ENCODE measurements at regions of chr5 and their contacts with region 1.

Region 1: GRCh38 chr5:102153003-102153759 is 142.9 kb downstream of the SLCO4C1 start:
- DNase-seq: peak; percentile 48
- ATAC-seq: peak; percentile 98
- H3K4me3 ChIP-seq: no peak overlapping the region
- H3K27ac ChIP-seq: no peak overlapping the region
- H3K4me1 ChIP-seq: peaks cover 20% of the 10 kb centered on the region
- H3K27me3 ChIP-seq: no peaks in the 10 kb centered on the region
- CTCF ChIP-seq: peak; percentile 81
- EP300 ChIP-seq: no peak
- POLR2A ChIP-seq: no peak
- RAD21 ChIP-seq: peak; percentile 58

Region 2: DNA sequence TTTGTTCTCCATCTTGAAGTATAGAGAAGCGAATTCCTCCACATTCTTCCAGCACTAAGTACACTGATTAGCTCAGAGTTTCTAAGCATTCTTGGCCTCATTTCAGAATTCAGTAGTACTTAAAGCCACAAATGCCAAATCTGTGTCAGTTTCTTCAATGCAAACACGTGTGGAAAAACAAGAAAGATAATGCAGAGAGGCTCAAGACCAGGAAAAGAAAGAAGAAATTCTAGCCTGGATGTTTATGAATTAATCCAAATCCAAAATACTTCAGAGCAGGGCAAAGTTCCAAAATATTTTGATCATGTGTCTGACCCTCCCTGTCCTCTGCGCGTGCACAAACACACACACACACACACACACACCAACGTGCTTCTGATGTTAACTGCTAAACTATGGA is 314.7 kb before region 1 on chr5:
- CTCF ChIA-PET with region 1: no interaction called
- POLR2A ChIA-PET with region 1: no interaction called
- in situ Hi-C with region 1: no loop called
- intact Hi-C with region 1: no loop called
- DNase-seq: no peak
- ATAC-seq: no peak
- H3K4me3 ChIP-seq: no peak overlapping the region
- H3K27ac ChIP-seq: no peak overlapping the region
- H3K4me1 ChIP-seq: no peaks in the 10 kb centered on the region
- H3K27me3 ChIP-seq: no peaks in the 10 kb centered on the region
- CTCF ChIP-seq: no peak
- EP300 ChIP-seq: no peak
- POLR2A ChIP-seq: no peak
- RAD21 ChIP-seq: no peak

Region 3: GRCh38 chr5:101977729-101978345 is 175.3 kb before region 1 on chr5:
- CTCF ChIA-PET with region 1: no interaction called
- POLR2A ChIA-PET with region 1: no interaction called
- in situ Hi-C with region 1: no loop called
- intact Hi-C with region 1: loop called (anchors 2 kb)
- DNase-seq: peak; percentile 49
- ATAC-seq: peak; percentile 57; the same call in 1 of the 3 replicates
- H3K4me3 ChIP-seq: no peak overlapping the region
- H3K27ac ChIP-seq: no peak overlapping the region
- H3K4me1 ChIP-seq: no peaks in the 10 kb centered on the region
- H3K27me3 ChIP-seq: no peaks in the 10 kb centered on the region
- CTCF ChIP-seq: peak; percentile 73
- EP300 ChIP-seq: no peak
- POLR2A ChIP-seq: no peak
- RAD21 ChIP-seq: peak; percentile 38; the same call in 1 of the 2 replicates

Region 4: GRCh38 chr5:102036927-102037326 is 116.3 kb before region 1 on chr5:
- CTCF ChIA-PET with region 1: no interaction called
- POLR2A ChIA-PET with region 1: no interaction called
- in situ Hi-C with region 1: no loop called
- intact Hi-C with region 1: no loop called
- DNase-seq: no peak
- ATAC-seq: no peak
- H3K4me3 ChIP-seq: no peak overlapping the region
- H3K27ac ChIP-seq: no peak overlapping the region
- H3K4me1 ChIP-seq: no peaks in the 10 kb centered on the region
- H3K27me3 ChIP-seq: no peaks in the 10 kb centered on the region
- CTCF ChIP-seq: no peak
- EP300 ChIP-seq: no peak
- POLR2A ChIP-seq: no peak
- RAD21 ChIP-seq: no peak

Region 5: GRCh38 chr5:102090770-102091381 is 62.3 kb before region 1 on chr5:
- CTCF ChIA-PET with region 1: no interaction called
- POLR2A ChIA-PET with region 1: no interaction called
- in situ Hi-C with region 1: loop called (anchors 5 kb)
- intact Hi-C with region 1: loop called (anchors 2 kb)
- DNase-seq: peak; percentile 77
- ATAC-seq: peak; percentile 100
- H3K4me3 ChIP-seq: no peak overlapping the region
- H3K27ac ChIP-seq: no peak overlapping the region
- H3K4me1 ChIP-seq: peaks cover 8% of the 10 kb centered on the region
- H3K27me3 ChIP-seq: no peaks in the 10 kb centered on the region; a peak in 1 of 5 replicates
- CTCF ChIP-seq: peak; percentile 81
- EP300 ChIP-seq: no peak
- POLR2A ChIP-seq: no peak
- RAD21 ChIP-seq: peak; percentile 73

Region 6: DNA sequence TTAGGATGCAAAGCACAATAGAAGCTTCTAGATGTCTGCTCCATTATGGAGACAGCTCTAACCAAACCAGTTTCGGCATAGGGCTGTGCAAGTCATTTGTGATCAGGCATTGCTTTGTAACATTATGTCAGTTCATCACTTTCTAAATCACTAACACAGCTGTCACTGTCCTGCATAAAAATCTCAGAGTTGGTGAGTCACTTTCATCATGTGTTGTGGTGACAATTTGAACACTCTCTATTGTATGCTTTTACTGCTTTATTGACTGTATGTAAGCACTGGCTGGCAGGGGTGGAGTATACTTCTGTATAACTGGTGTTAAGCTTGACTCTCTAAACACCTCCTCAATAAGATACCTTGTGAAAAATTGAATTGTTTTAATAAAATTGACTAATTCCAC is 65.0 kb after region 1 on chr5:
- CTCF ChIA-PET with region 1: interaction called, 12 read pairs
- POLR2A ChIA-PET with region 1: no interaction called
- in situ Hi-C with region 1: loop called (anchors 5 kb)
- intact Hi-C with region 1: loop called (anchors 2 kb)
- DNase-seq: peak; percentile 28
- ATAC-seq: no peak; the same call in 2 of the 3 replicates
- H3K4me3 ChIP-seq: no peak overlapping the region
- H3K27ac ChIP-seq: no peak overlapping the region
- H3K4me1 ChIP-seq: peaks cover 47% of the 10 kb centered on the region
- H3K27me3 ChIP-seq: no peaks in the 10 kb centered on the region
- CTCF ChIP-seq: no peak
- EP300 ChIP-seq: no peak
- POLR2A ChIP-seq: no peak
- RAD21 ChIP-seq: no peak

Region 7: DNA sequence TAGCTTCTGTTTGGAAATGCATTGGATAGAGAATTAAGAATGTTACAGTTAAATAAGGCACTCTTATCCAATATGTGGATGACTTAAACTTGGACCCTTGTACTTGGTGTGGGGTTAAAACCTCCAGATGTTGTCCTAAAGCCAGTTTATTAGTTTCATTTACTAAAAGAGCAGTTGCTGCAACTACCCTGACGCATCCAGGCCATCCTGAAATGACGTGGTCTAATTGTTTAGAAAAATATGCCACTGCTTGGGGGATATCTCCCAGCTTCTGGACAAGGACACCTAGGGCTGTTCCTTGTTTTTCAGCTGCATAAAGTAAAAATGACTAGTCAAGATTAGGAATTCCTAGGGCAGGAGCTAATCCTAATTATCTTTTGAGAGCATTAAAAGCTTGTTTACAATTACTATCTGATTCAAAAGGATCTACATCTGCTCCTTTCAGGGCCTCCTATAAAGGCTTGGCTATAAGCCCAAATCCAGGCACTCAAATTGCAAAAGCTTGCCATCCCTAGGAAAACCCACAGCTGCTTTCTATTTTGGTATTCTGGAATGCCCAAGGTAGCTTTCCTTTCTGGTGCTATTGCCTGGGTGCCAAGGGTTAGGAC is 188.6 kb after region 1 on chr5:
- CTCF ChIA-PET with region 1: no interaction called
- POLR2A ChIA-PET with region 1: no interaction called
- in situ Hi-C with region 1: no loop called
- intact Hi-C with region 1: no loop called
- DNase-seq: no peak
- ATAC-seq: no peak
- H3K4me3 ChIP-seq: no peak overlapping the region
- H3K27ac ChIP-seq: no peak overlapping the region
- H3K4me1 ChIP-seq: no peaks in the 10 kb centered on the region
- H3K27me3 ChIP-seq: no peaks in the 10 kb centered on the region
- CTCF ChIP-seq: no peak
- EP300 ChIP-seq: no peak
- POLR2A ChIP-seq: no peak
- RAD21 ChIP-seq: no peak

Measured in HepG2 (cell line).